GM12878 (cell line): ENCODE measurements at regions of chr4 and their contacts with region 1.

Region 1: GRCh38 chr4:181143250-181143854 is 1099.8 kb upstream of the TENM3 start:
- DNase-seq: peak; percentile 5
- ATAC-seq: peak; percentile 90
- H3K4me3 ChIP-seq: no peak overlapping the region
- H3K27ac ChIP-seq: no peak overlapping the region
- H3K4me1 ChIP-seq: no peaks in the 10 kb centered on the region
- H3K27me3 ChIP-seq: no peaks in the 10 kb centered on the region; a peak in 1 of 4 replicates
- CTCF ChIP-seq: peak; percentile 81 to 84 (median 83)
- EP300 ChIP-seq: no peak
- POLR2A ChIP-seq: no peak
- RAD21 ChIP-seq: peak; percentile 95

Region 2: DNA sequence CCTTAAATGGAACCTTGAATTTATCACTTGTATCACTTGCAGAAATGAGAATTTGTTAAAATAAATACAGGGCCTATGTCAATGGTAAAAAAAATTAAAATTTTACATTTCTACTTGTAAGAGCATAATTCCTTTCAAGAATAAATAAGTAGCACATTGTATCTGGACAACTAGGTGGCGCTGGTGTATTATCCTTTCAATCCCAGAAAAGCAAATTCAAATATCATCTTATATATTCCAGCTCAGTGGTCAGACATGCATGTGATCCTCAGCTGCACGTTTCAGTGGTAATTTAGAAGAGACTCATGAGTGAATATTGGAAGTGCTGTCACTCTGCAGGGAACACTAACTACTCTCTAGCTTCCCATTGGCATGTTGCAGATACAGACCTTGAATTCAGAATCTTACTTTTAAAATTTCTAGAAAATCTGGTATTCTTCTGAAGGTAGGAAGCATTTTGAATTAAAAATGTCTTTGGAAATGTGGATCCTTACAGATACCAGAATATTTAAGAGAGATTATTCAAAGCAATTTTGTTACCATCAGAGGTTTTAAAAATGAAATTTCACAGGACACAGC is 314.8 kb before region 1 on chr4:
- CTCF ChIA-PET with region 1: no interaction called
- POLR2A ChIA-PET with region 1: no interaction called
- RAD21 ChIA-PET with region 1: interaction called, 3 read pairs
- SMC1A ChIA-PET with region 1: no interaction called
- in situ Hi-C with region 1: no loop called
- intact Hi-C with region 1: loop called (anchors 1 kb)
- DNase-seq: no peak
- ATAC-seq: peak; percentile 51; the same call in 2 of the 3 replicates
- H3K4me3 ChIP-seq: no peak overlapping the region
- H3K27ac ChIP-seq: no peak overlapping the region
- H3K4me1 ChIP-seq: peaks cover 4% of the 10 kb centered on the region; the same call in 1 of the 2 replicates
- H3K27me3 ChIP-seq: no peaks in the 10 kb centered on the region
- CTCF ChIP-seq: peak; percentile 56 to 59 (median 58)
- EP300 ChIP-seq: no peak
- POLR2A ChIP-seq: no peak
- RAD21 ChIP-seq: peak; percentile 71

Region 3: DNA sequence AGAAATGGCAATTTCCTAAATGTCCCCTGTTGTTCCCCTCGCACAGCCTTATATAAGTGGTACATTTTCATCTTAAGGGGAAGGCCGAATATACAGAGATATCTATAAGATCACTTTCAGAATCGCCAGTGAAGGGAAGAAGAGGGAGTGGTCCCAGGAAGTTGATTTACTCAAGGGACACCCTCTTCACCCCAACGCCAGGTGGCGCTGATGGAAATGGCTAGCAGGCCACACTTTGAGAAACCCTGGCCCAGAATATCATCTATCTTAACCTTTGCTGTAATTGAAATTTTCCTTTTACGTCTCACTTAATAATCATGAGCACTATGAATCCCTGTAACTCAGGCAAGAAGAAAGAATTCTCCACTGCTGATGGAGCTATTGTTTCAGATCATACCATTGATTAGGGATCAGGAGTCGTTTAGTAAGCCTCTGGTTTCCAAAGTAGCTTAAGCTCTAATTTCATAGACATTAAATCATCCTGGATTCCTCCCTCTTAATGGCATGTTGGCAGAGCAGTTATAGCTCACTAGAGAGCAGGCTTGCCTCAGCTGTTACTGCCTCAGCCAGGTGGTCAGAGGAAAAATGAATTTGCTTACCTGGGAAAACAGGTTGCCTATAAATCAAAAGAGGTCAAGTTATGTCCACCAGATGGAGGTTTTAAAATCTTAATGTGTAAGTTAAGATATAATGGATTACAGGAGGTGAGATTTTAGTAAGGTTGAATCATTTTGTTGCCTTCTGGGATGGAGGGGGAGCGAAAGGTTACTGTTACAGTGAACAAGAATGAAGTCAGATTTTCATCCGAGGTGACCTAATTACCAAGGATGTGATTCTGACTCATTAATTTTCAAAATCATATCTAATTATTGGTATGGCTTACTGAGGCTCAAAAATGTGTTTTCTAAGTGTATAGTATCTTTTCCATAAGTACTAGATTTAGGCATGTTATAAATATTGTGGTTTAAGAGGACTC is 158.7 kb after region 1 on chr4:
- CTCF ChIA-PET with region 1: interaction called, 3 read pairs
- POLR2A ChIA-PET with region 1: no interaction called
- RAD21 ChIA-PET with region 1: no interaction called
- SMC1A ChIA-PET with region 1: interaction called, 3 read pairs
- in situ Hi-C with region 1: no loop called
- intact Hi-C with region 1: loop called (anchors 5 kb)
- DNase-seq: no peak
- ATAC-seq: peak; percentile 96
- H3K4me3 ChIP-seq: no peak overlapping the region
- H3K27ac ChIP-seq: no peak overlapping the region
- H3K4me1 ChIP-seq: no peaks in the 10 kb centered on the region
- H3K27me3 ChIP-seq: no peaks in the 10 kb centered on the region
- CTCF ChIP-seq: peak; percentile 62 to 74 (median 66)
- EP300 ChIP-seq: no peak
- POLR2A ChIP-seq: no peak
- RAD21 ChIP-seq: peak; percentile 58